CD8-positive, alpha-beta T cell (primary cell): ENCODE measurements at regions of chr15 and their contacts with region 1.

Region 1: DNA sequence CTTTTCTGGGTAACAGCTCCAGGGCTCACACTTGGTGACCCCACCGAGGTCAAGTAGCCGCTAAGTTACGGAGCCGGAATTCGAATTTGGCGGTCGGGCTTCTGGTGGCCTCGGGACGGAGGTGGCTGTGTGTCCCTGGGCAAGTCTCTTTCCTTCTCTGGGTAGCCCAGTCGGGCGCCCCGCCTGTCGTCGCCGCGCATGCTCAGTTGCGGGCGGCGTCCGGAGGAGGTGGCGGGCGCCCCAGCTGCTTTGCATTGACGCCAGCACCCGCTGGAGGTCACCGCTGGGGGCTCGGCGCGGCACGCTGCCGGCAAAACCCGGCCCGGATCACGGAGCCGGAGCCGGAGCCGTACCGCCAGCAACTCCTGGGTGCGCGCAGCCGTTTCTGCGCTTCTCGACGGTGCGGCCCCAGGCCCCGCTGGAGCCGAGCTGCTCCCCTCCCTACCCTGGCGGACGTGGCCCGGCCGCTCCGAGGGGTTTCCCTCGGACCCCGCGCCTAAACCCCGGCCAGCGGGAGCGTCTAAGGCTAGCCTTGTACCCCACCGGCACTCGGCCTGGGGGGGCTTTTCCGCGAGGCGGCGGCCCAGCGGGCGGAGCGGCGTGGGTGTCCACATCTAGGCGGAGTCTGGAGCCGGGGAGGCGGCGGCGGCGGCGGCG is 474 bp upstream of the PDE8A start:
- DNase-seq: peak; percentile 92 to 98 (median 95)
- ATAC-seq: peak; percentile 70
- H3K4me3 ChIP-seq: peak overlapping the region; percentile 78 to 94
- H3K4me3 Mint-ChIP-seq: peak overlapping the region; percentile 94
- H3K27ac ChIP-seq: peak overlapping the region; percentile 93 to 94
- H3K27ac Mint-ChIP-seq: peak overlapping the region; percentile 96
- H3K4me1 ChIP-seq: peaks cover 19% of the 10 kb centered on the region
- H3K4me1 Mint-ChIP-seq: peaks cover 39% of the 10 kb centered on the region
- H3K27me3 ChIP-seq: no peaks in the 10 kb centered on the region
- H3K27me3 Mint-ChIP-seq: no peaks in the 10 kb centered on the region
- CTCF ChIP-seq: no peak

Region 2: DNA sequence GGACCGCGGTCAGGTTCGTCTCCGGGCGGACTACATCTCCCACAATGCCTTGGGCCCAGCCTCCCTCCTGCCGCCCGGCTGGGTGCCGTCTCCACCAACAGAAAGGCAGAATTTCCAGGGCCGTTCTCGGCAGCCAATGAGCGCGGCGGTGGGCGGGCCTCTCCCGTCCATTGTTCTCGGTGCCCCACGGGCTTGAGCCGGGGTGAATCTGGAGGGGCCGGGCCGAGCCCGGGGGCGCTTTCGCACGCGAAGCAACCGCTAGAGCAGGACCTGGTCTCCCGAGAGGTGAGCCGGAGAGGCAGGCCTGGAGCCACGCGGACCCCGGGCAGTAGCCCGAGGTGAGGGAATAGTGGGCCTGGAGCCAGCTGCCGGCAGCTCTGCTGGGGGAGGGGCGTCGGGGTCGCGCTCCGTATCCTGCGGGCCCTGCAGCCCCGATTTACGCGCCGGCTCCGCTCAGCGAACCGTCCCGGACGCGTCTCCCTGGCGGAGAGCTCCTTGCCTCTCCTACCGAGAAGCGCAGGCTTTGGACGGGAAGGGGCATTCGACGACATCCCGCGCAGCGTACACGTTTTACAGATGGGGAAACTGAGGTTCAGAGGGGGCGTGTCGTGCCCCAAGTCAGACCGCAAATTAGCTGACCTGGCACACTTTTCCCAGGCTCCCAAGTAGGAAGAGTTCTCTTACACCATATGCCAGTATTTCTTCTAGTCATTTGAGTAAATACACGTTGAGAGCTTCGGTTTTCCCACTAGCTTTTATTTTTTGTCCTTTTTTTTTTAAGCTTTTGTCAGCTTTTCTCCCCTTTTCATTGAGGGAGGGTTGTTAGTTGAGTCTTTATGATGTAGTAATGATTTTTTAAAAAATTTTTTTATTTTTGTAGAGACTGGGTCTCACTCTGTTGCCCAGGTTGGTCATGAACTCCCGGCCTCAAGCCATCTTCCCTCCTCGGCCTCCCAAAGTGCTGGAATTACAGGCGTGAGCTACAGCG is 380.0 kb before region 1 on chr15 and contains the start of gene ZSCAN2:
- CTCF ChIA-PET with region 1: interaction called, 4 read pairs
- POLR2A ChIA-PET with region 1: interaction called, 6 read pairs
- intact Hi-C with region 1: loop called (anchors 1 to 2 kb)
- DNase-seq: peak; percentile 81 to 95 (median 92)
- ATAC-seq: peak; percentile 95
- H3K4me3 ChIP-seq: peak within 1 kb of the TSS; percentile 93 to 100
- H3K4me3 Mint-ChIP-seq: peak within 1 kb of the TSS; percentile 99
- H3K27ac ChIP-seq: peak within 1 kb of the TSS; percentile 34 to 58
- H3K27ac Mint-ChIP-seq: peak within 1 kb of the TSS; percentile 93
- H3K4me1 ChIP-seq: peaks cover 42% of the 10 kb centered on the region
- H3K4me1 Mint-ChIP-seq: peaks cover 74% of the 10 kb centered on the region
- H3K27me3 ChIP-seq: no peaks in the 10 kb centered on the region
- H3K27me3 Mint-ChIP-seq: no peaks in the 10 kb centered on the region
- CTCF ChIP-seq: no peak
- total RNA-seq, gene ZSCAN2: 2.7 to 4.4 TPM

Region 3: GRCh38 chr15:84716036-84716799 is 265.0 kb before region 1 on chr15 and contains the start of gene SEC11A:
- CTCF ChIA-PET with region 1: no interaction called
- POLR2A ChIA-PET with region 1: interaction called, 7 read pairs
- intact Hi-C with region 1: loop called (anchors 10 kb)
- DNase-seq: peak; percentile 84 to 95 (median 90)
- ATAC-seq: peak; percentile 94
- H3K4me3 ChIP-seq: peak within 1 kb of the TSS; percentile 94 to 98
- H3K4me3 Mint-ChIP-seq: peak within 1 kb of the TSS; percentile 96
- H3K27ac ChIP-seq: peak within 1 kb of the TSS; percentile 74 to 86
- H3K27ac Mint-ChIP-seq: peak within 1 kb of the TSS; percentile 97
- H3K4me1 ChIP-seq: peaks cover 37% of the 10 kb centered on the region
- H3K4me1 Mint-ChIP-seq: peaks cover 44% of the 10 kb centered on the region
- H3K27me3 ChIP-seq: no peaks in the 10 kb centered on the region
- H3K27me3 Mint-ChIP-seq: no peaks in the 10 kb centered on the region
- CTCF ChIP-seq: no peak
- total RNA-seq, gene SEC11A: 36.4 to 38.5 TPM

Region 4: DNA sequence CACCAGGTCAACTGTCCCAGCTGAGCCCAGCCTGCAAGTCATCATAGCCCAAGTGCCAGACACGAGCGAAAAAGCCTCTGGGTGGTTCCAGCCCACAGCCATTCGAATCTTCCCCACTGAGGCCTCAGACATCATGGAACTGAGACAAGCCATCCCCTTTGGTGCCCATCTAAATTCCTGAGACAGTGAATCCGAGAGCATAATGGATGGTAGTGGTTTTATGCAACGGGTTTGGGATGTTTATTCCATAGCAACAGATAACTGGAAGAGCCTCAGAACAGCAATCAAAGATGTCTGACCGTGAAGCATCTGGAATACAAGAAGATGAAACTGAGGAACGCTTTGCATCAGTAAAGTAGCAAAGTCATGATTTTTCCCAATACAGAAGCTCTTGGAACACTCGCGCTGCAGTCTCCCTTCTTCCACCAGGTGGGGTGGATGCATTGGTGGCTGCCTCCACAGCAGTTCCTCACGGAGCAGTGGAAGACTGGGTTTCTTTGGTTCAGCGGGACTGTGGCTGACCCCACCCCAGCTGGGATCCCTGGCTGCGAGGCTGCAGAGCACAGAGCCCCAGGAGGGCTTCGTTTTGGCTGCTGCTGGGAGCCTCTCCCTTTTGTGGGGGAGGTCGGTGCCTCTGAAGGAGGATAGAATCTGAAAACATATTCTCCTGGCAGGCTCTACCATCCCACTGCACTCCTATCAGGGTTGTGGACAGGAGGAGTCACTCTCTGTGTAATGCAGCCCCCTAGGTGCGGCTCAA is 25.9 kb before region 1 on chr15:
- CTCF ChIA-PET with region 1: interaction called, 4 read pairs
- POLR2A ChIA-PET with region 1: no interaction called
- intact Hi-C with region 1: loop called in 1 of 2 experiments (anchors 2 kb)
- DNase-seq: peak in 8 of 9 experiments; percentile 5 to 60 (median 48)
- ATAC-seq: peak; percentile 49
- H3K4me3 ChIP-seq: no peak overlapping the region
- H3K4me3 Mint-ChIP-seq: no peak overlapping the region
- H3K27ac ChIP-seq: no peak overlapping the region
- H3K27ac Mint-ChIP-seq: no peak overlapping the region
- H3K4me1 ChIP-seq: no peaks in the 10 kb centered on the region
- H3K4me1 Mint-ChIP-seq: peaks cover 8% of the 10 kb centered on the region
- H3K27me3 ChIP-seq: no peaks in the 10 kb centered on the region
- H3K27me3 Mint-ChIP-seq: peaks cover 12% of the 10 kb centered on the region
- CTCF ChIP-seq: peak; percentile 61

Region 5: GRCh38 chr15:85030301-85031049 is 49.3 kb after region 1 on chr15:
- CTCF ChIA-PET with region 1: no interaction called
- POLR2A ChIA-PET with region 1: interaction called, 3 read pairs
- intact Hi-C with region 1: loop called in 1 of 2 experiments (anchors 5 kb)
- DNase-seq: peak in 2 of 9 experiments; percentile 34 to 40
- ATAC-seq: peak; percentile 69
- H3K4me3 ChIP-seq: no peak overlapping the region
- H3K4me3 Mint-ChIP-seq: no peak overlapping the region
- H3K27ac ChIP-seq: no peak overlapping the region
- H3K27ac Mint-ChIP-seq: peak overlapping the region; percentile 19
- H3K4me1 ChIP-seq: peaks cover 43% of the 10 kb centered on the region
- H3K4me1 Mint-ChIP-seq: peaks cover 49% of the 10 kb centered on the region
- H3K27me3 ChIP-seq: no peaks in the 10 kb centered on the region
- H3K27me3 Mint-ChIP-seq: no peaks in the 10 kb centered on the region
- CTCF ChIP-seq: no peak

Region 6: GRCh38 chr15:85407804-85408746 is 426.9 kb after region 1 on chr15:
- CTCF ChIA-PET with region 1: no interaction called
- POLR2A ChIA-PET with region 1: no interaction called
- intact Hi-C with region 1: loop called in 1 of 2 experiments (anchors 10 kb)
- DNase-seq: peak in 4 of 9 experiments; percentile 7 to 64 (median 32)
- ATAC-seq: peak; percentile 73
- H3K4me3 ChIP-seq: no peak overlapping the region
- H3K4me3 Mint-ChIP-seq: peak overlapping the region; percentile 30
- H3K27ac ChIP-seq: peak overlapping the region in 1 of 2 experiments; percentile 26
- H3K27ac Mint-ChIP-seq: peak overlapping the region; percentile 71
- H3K4me1 ChIP-seq: peaks cover 51% of the 10 kb centered on the region
- H3K4me1 Mint-ChIP-seq: peaks cover 79% of the 10 kb centered on the region
- H3K27me3 ChIP-seq: no peaks in the 10 kb centered on the region
- H3K27me3 Mint-ChIP-seq: no peaks in the 10 kb centered on the region
- CTCF ChIP-seq: no peak